Heart left ventricle (tissue), 16 donors: ENCODE measurements at regions of chr7 and their contacts with region 1.

Region 1: DNA sequence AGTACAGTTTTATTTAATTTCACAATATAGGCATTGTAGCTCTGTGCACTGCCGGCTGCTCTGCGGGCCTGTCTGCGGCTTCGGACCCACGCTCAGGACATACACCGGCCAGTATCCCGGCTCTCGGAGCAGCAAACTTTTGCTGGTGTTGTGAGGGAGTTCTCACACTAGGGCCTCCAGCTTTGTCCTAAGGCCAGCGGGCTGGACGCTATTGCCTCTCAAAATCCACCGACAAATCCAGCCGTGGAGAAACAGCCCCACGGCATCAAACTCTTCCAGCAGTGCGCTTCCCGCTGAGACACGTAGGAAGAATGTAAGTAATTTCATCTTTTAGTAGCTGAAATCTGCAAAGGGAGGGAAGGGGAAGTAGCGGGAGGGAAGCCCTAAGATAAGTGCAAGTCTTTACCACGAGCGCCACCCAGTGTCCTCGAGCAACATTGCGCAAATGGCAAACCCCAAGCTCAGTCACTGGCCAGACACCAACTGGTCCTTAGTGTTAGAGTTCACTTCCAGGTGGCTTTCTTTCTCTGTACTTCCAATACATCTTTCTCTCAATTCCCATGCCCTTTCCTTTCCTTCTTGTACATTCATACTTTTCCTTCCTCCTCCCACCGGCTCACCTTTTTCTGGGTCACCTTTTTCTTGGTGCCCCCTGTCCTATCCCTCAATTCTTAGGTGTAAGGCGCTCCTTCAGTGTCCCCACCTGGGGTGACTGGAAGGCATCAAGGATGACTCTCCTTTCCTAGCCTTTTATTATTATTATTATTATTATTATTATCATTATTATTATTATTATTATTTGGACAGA is 3.0 kb upstream of the DLX5 start:
- DNase-seq: peak; percentile 62 to 78 (median 75)
- ATAC-seq: peak; percentile 59 to 93 (median 85)
- H3K4me3 ChIP-seq: peak overlapping the region in 11 of 12 donors; percentile 6 to 62 (median 47)
- H3K27ac ChIP-seq: no peak overlapping the region
- H3K4me1 ChIP-seq: peaks cover 4 to 35% (median 16%) of the 10 kb centered on the region in 12 donors
- H3K27me3 ChIP-seq: peaks cover 13 to 96% (median 44%) of the 10 kb centered on the region in 9 donors
- CTCF ChIP-seq: peak; percentile 72 to 93 (median 84)
- POLR2A ChIP-seq: no peak

Region 2: DNA sequence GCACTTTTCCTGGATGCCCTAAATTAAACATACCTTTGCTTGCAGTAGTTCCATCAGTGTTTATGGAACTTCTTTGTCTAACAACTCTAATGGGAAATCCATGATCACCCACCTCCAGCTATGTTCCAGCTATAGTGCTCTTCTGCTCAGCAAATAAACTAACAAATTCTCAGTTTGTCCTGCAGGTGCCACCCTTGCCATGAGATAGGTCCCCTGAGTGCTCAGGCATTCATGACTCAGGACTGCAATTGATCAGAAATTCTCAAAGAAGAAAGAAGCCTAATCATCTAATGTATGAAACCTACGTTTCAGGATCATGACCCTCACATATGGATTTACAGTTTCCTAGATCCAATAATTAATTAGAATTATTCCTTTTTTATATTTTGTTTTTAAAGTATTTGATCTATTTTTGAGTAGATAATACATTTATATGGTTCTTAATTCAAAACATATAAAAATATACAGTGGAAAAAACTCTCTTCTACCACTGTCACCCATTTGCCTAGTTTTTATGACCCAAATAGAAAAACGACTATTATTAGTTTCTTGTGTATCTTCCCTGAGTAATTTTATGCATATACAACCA is 1303.9 kb before region 1 on chr7:
- intact Hi-C with region 1: loop called in 2 of 10 experiments (anchors 10 kb)
- DNase-seq: peak in 2 of 5 donors; percentile 16 to 29
- ATAC-seq: peak in 3 of 4 donors; percentile 78 to 88 (median 84)
- H3K4me3 ChIP-seq: no peak overlapping the region
- H3K27ac ChIP-seq: no peak overlapping the region
- H3K4me1 ChIP-seq: no peaks in the 10 kb centered on the region
- H3K27me3 ChIP-seq: peaks cover 0 to 6% (median 0%) of the 10 kb centered on the region in 9 donors
- CTCF ChIP-seq: peak in 11 of 12 donors; percentile 33 to 59 (median 50)
- POLR2A ChIP-seq: no peak

Region 3: DNA sequence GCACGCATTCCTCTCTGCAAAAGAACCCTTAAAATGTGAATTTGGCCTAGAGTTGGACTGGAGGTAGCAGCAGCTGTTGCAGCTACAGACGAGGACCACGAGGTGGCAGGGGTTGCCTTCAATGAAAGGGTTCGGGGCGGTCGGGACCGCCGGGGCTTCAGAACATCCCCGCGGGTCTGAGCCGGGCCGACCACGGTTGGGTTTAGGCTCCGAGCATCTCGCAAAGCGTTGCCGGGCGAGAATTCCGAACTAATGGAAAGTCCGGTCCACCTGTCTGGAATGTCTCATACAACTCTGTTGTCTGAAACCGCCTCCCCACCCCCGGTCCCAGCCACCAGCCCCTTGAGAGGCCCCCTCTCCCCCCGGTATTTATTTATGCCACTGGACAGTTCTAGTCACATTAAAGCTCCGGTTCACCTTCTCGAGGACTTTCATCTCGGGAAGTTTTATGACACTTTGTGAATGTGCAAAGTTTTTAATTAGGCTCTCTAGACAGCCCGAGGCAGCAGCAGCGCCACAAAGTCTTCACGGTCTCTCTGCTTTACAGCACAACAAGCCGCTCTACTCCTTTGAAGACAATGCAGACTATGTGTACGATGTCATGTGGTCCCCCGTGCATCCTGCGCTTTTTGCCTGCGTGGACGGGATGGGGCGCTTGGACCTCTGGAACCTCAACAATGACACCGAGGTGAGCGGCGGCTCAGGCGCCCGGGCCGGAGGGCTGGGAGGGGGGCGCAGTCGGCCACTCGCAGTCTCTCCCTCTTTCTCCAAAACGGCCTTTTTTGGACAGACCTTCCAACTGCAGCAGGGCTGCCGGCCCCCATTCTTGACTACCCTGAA is 951.9 kb before region 1 on chr7:
- intact Hi-C with region 1: loop called (anchors 1 to 5 kb)
- DNase-seq: peak; percentile 48 to 73 (median 59)
- ATAC-seq: peak; percentile 89 to 98 (median 95)
- H3K4me3 ChIP-seq: peak overlapping the region; percentile 24 to 71 (median 54)
- H3K27ac ChIP-seq: no peak overlapping the region
- H3K4me1 ChIP-seq: peaks cover 0 to 9% (median 4%) of the 10 kb centered on the region in 12 donors
- H3K27me3 ChIP-seq: peaks cover 0 to 23% (median 0%) of the 10 kb centered on the region in 9 donors
- CTCF ChIP-seq: peak; percentile 66 to 91 (median 80)
- POLR2A ChIP-seq: no peak

Region 4: GRCh38 chr7:96414931-96415292 is 612.7 kb before region 1 on chr7:
- intact Hi-C with region 1: loop called in 7 of 10 experiments (anchors 2 to 10 kb)
- DNase-seq: peak in 1 of 5 donors; percentile 27
- ATAC-seq: peak in 3 of 4 donors; percentile 57 to 78 (median 66)
- H3K4me3 ChIP-seq: no peak overlapping the region
- H3K27ac ChIP-seq: no peak overlapping the region
- H3K4me1 ChIP-seq: peaks cover 0 to 24% (median 2%) of the 10 kb centered on the region in 12 donors
- H3K27me3 ChIP-seq: no peaks in the 10 kb centered on the region
- CTCF ChIP-seq: peak; percentile 32 to 66 (median 50)
- POLR2A ChIP-seq: no peak

Region 5: DNA sequence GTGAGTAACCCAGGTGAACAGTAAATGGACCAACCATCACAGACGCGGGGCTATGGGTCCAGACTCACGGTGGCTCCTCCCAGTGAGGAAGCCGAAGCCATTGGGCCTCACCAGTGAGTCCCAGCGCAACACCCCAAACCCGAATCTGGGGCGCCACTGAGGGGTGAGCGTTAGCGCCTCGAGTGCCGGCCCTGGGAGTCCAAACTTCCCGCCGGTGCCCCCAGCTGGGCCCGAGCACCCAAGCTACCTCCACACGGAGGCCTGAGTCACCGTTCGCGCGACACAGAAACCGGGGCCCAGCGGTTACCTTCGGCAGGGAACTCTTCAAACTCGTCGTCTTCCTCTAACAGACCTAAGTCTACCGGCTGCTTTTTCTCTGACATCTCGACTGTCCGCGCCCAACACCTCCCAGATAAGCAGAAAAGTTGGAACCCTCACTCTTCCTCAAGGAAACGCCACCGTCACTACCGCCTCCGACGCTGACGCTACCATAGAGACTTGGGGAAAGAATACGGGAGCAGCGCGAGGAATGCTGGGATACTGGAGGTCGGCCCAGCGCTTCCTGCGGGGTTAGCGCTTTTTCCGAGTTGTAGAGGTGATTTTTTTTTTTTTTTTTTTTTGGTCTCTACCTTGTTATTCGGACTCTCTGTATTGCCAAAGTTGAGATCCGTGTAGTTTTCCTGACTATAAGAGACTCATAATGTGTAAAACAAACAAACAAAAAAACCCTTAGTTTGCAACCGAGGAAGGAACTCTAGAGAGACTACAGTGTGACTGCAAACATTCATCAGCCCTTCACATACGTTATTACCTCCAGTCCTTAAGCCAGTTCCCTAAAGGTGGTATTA is 318.0 kb before region 1 on chr7 and contains the start of gene SEM1:
- intact Hi-C with region 1: loop called in 1 of 10 experiments (anchors 10 kb)
- DNase-seq: peak; percentile 87 to 93 (median 90)
- ATAC-seq: peak; percentile 98 to 100 (median 100)
- H3K4me3 ChIP-seq: peak within 1 kb of the TSS; percentile 61 to 99 (median 90)
- H3K27ac ChIP-seq: peak within 1 kb of the TSS; percentile 60 to 93 (median 89)
- H3K4me1 ChIP-seq: peaks cover 6 to 29% (median 22%) of the 10 kb centered on the region in 12 donors
- H3K27me3 ChIP-seq: no peaks in the 10 kb centered on the region
- CTCF ChIP-seq: no peak
- POLR2A ChIP-seq: peak in 1 of 2 donors; percentile 41
- total RNA-seq, gene SEM1: 25.5 to 66.2 (median 42.5) TPM